IMR-90 (cell line): ENCODE measurements at regions of chr16 and their contacts with region 1.

Region 1: GRCh38 chr16:67159593-67160406 is at the starts of genes FBXL8 and TRADD:
- DNase-seq: peak; percentile 41
- ATAC-seq: peak; percentile 73
- H3K4me3 ChIP-seq: peak within 1 kb of the TSS; percentile 86
- H3K27ac ChIP-seq: peak within 1 kb of the TSS; percentile 69
- H3K4me1 ChIP-seq: peaks cover 20% of the 10 kb centered on the region; the same call in 1 of the 2 replicates
- H3K27me3 ChIP-seq: peaks cover 10% of the 10 kb centered on the region; the same call in 1 of the 2 replicates
- CTCF ChIP-seq: peak; percentile 48
- POLR2A ChIP-seq: peak; percentile 43; the same call in 1 of the 2 replicates
- RAD21 ChIP-seq: peak; percentile 12; the same call in 1 of the 2 replicates
- total RNA-seq, gene FBXL8: 1.9 and 2.3 TPM in 2 replicates
- total RNA-seq, gene TRADD: 8.1 and 8.6 TPM in 2 replicates

Region 2: DNA sequence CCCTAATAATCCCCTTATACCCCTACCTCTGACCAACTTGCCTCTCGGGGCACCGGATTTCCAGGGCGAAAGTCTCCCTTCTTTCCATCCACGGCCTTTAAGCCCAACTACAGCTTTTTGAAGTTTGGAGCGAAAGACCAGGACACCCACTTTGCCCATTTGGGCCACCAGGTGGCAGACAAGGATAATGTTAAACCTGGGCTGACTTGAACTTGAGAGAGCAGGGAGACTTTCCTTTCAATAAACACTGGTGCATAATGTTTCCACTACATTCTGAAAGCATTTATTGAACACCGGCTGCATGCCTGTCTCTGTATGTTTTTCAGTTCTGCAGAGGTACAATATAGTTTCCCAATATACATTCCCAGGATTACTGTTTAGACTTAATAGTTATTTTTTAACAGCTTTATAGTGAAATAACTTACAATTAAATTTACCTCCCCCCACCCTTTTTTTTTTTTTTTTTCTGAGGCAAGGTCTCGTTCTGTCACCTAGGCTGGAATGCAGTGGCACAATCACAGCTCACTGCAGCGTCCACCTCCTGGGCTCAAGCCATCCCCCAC is 205.6 kb before region 1 on chr16:
- CTCF ChIA-PET with region 1: interaction called, 3 read pairs
- POLR2A ChIA-PET with region 1: no interaction called
- dilution Hi-C with region 1: no loop called
- in situ Hi-C with region 1: no loop called
- intact Hi-C with region 1: loop called (anchors 1 kb)
- DNase-seq: peak; percentile 73
- ATAC-seq: peak; percentile 93
- H3K4me3 ChIP-seq: no peak overlapping the region
- H3K27ac ChIP-seq: no peak overlapping the region
- H3K4me1 ChIP-seq: no peaks in the 10 kb centered on the region; the same call in 1 of the 2 replicates
- H3K27me3 ChIP-seq: peaks cover 12% of the 10 kb centered on the region
- CTCF ChIP-seq: peak; percentile 84
- POLR2A ChIP-seq: no peak
- RAD21 ChIP-seq: peak; percentile 86

Region 3: DNA sequence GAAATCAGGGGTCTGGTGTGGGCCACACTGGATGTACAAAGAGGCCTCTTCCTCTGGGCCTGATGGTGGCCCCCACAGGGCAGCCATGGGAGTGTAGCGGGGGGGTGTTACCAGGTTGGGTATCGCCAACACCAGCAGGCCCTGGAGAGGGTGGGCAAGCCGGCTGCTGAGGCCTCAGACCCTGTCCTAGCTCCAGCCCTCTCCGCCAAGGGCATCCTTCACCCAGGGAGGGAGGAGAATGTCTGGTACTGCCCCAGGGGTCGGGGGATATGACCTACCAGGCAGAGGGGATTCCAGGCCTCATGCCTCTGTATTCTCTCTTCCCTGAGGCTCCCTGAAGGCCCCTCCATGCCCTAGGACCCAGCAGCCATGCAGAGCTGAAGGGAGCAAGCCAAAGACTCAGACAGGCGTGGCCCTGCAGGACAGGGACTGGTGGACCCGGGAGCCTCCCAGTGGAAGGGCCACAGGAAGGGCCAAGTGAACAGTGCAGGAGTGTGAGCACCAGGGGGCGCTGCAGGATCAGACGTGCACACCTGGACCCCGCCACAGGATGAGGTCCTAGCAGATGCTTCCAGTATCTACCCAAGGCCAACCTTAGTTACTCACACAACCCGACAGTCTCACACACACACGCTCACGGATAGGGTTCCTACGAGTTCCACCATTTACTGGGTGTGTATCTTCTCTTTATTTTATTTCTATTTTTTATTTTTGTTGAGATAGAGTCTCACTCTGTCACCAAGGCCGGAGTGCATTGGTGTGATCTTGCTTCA is 182.3 kb before region 1 on chr16:
- CTCF ChIA-PET with region 1: interaction called, 5 read pairs
- POLR2A ChIA-PET with region 1: no interaction called
- dilution Hi-C with region 1: no loop called
- in situ Hi-C with region 1: no loop called
- intact Hi-C with region 1: loop called (anchors 1 kb)
- DNase-seq: peak; percentile 79
- ATAC-seq: peak; percentile 97
- H3K4me3 ChIP-seq: no peak overlapping the region
- H3K27ac ChIP-seq: no peak overlapping the region
- H3K4me1 ChIP-seq: no peaks in the 10 kb centered on the region; the same call in 1 of the 2 replicates
- H3K27me3 ChIP-seq: no peaks in the 10 kb centered on the region; the same call in 1 of the 2 replicates
- CTCF ChIP-seq: peak; percentile 97
- POLR2A ChIP-seq: peak; percentile 60; the same call in 1 of the 2 replicates
- RAD21 ChIP-seq: peak; percentile 100

Region 4: DNA sequence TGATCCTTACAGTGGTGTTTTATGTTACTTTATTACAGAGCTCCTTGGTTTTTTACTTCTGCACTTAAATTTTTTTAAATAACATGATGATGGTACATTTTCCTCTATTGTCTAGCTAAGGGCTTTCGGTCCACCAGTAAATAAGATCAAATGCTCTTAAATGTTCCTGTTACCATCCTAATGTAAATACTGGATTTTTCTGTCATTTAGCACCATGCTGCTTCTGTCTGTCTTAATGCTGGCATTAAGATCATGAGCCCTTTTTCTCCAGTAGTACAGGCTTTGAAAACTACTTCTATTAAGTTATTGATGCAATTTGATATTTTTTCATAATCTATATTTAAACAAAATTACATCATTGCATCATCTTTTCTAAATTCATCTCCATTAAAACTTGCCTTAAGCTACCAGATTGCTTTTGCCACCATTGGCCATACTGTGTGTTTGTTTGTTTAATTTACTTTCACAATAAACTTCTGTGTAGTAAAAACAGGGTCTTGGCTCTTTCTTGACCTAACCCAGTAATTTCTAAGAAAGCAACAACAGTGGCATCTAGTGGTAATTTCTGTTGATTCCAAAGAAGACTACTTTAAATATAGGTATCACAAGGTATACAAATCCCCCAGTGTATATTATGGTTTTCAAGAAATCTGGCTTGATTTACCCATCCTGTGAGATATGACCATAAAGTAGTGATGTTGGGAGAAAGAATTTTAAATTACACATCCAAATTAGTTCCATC is 59.1 kb before region 1 on chr16:
- CTCF ChIA-PET with region 1: interaction called, 11 read pairs
- POLR2A ChIA-PET with region 1: no interaction called
- dilution Hi-C with region 1: no loop called
- in situ Hi-C with region 1: no loop called
- intact Hi-C with region 1: no loop called
- DNase-seq: peak; percentile 56
- ATAC-seq: peak; percentile 63
- H3K4me3 ChIP-seq: no peak overlapping the region
- H3K27ac ChIP-seq: no peak overlapping the region
- H3K4me1 ChIP-seq: peaks cover 5% of the 10 kb centered on the region
- H3K27me3 ChIP-seq: no peaks in the 10 kb centered on the region
- CTCF ChIP-seq: peak; percentile 58
- POLR2A ChIP-seq: no peak
- RAD21 ChIP-seq: peak; percentile 58